Mammary epithelial cell (primary cell): ENCODE measurements at regions of chr3 and their contacts with region 1.

Region 1: DNA sequence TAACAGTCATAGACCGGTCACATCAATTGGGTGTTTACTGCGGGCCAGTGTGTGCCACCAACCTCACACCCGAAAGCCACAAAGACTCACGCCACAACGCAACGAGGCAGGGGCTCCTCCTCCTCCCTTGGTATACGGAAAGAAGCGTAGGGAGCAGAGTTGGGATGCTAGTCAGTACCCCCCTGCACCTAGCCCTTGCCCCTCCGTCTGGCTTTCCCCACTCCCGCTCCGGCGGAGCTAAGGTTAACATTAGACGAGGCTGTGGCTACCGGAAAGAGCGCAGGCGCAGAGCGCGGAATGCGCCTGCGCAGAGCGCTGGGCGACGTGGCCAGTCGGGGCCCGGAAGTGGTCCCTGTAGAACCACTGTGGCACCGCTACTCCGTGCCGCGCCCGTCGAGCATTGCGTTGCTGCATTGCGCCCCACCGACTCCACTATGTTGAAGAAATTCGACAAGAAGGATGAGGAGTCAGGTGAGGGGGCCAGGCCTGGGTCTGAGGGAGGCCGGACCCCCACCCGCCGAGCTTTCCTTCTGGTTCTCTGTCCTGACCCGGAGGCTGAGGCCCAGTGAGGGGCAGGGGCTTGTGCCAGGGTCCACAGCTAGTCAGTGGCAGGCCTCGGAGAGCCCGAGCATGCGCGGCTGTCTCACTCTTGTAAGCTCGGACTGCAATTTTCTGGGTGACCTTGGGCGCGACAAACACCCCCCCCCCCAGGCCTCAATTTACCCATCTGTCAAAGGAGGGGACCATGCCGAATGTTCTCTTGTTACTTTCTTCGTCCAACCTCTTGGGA is at the start of gene COPG1:
- DNase-seq: peak; percentile 84
- H3K4me3 ChIP-seq: peak within 1 kb of the TSS; percentile 89 to 94 (median 92)
- H3K27ac ChIP-seq: peak within 1 kb of the TSS; percentile 83
- H3K4me1 ChIP-seq: peaks cover 28% of the 10 kb centered on the region
- H3K27me3 ChIP-seq: no peaks in the 10 kb centered on the region
- CTCF ChIP-seq: no peak
- total RNA-seq, gene COPG1: 173 to 176 TPM

Region 2: GRCh38 chr3:129052675-129053074 is 196.8 kb before region 1 on chr3:
- CTCF ChIA-PET with region 1: interaction called, 5 read pairs
- dilution Hi-C with region 1: no loop called
- in situ Hi-C with region 1: no loop called
- intact Hi-C with region 1: loop called (anchors 1 kb)
- DNase-seq: no peak
- H3K4me3 ChIP-seq: no peak overlapping the region
- H3K27ac ChIP-seq: no peak overlapping the region
- H3K4me1 ChIP-seq: no peaks in the 10 kb centered on the region
- H3K27me3 ChIP-seq: no peaks in the 10 kb centered on the region
- CTCF ChIP-seq: no peak

Region 3: DNA sequence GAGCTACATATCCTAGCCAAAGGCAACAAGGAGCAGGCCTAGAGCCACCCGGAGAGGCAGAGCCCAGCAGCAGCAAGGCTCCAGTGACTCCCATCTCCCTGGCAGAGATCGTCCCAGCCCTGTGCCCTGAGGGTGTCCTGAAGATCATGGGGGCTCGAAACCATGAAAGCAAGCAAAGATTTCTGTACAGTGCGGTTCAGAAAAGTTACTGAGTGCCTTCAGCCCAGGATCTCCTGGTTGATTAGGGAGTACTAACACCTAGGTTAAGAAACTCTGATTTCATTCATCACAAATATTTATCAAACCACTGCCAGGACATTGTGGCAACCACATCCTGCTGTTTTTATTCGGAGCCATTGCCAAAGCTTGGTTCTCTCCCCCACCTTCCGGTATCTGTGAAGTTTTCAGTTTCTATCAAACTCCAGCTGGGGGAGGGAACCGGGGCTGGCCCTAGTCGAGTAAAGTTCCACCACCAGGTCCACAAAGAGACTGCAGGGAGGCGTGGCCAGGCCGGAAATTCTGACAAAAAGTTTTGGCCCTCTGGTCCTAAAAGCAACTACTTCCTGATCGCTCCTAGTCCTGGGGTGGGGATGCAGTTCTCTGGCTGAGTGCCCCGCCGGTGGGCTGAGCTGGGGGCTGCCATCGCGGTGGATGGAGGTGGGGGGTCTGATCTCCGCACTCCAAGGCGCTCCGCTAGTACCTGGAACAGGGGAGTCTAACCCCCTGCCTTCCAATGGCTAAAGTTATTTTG is 129.0 kb before region 1 on chr3:
- CTCF ChIA-PET with region 1: no interaction called
- dilution Hi-C with region 1: no loop called
- in situ Hi-C with region 1: no loop called
- intact Hi-C with region 1: loop called (anchors 1 kb)
- DNase-seq: peak; percentile 97
- H3K4me3 ChIP-seq: peak overlapping the region; percentile 85 to 87 (median 87)
- H3K27ac ChIP-seq: peak overlapping the region; percentile 98
- H3K4me1 ChIP-seq: peaks cover 29% of the 10 kb centered on the region
- H3K27me3 ChIP-seq: no peaks in the 10 kb centered on the region
- CTCF ChIP-seq: peak; percentile 12 to 43

Region 4: DNA sequence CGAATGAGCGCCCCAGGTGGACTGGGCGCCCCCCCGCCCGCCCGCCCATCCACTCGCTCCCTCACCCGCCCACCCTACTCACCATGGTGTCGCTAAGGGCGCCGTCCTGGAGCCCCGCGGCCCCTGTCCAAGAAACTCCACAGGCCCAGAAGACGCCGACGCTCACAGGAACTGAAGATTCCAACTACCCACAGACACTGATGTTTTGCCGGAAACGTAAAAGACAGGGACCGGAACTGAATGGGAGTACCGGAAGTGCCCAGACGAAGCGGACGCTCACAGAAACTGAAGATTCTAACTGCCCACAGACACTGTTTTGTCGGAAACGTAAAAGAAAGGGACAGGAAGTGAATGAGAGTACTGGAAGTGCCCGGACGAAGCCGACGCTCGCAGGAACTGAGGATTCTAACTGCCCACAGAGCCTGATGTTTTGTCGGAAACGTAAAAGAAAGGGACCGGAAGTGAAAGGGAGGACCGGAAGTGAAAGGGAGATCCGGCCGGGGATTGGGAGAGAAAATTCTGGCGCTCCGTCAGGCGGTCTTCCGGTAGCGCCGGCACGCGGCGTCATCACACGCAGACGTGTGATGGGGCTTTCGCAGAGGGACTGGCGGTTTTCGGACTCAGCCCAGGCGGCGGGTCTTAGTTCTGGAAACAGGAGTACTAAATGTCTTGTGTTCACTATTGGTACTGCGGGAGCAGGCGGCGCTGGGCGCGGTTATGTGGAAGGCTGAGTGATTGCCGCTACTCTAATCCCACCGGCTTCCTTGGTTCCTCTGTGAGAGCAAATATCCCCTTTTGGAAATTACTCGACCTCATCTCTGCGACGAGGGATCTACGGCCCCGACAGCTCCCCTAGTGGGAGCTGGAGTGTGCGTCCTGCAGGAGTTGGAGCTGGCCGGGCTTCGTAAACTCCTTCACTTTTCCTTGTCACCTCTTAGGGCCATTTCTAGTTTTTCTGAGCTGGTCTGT is 88.3 kb before region 1 on chr3 and contains the start of gene ISY1:
- CTCF ChIA-PET with region 1: interaction called, 7 read pairs
- dilution Hi-C with region 1: no loop called
- in situ Hi-C with region 1: no loop called
- intact Hi-C with region 1: loop called (anchors 1 kb)
- DNase-seq: peak; percentile 96
- H3K4me3 ChIP-seq: peak within 1 kb of the TSS; percentile 65 to 99 (median 96)
- H3K27ac ChIP-seq: peak within 1 kb of the TSS; percentile 90
- H3K4me1 ChIP-seq: peaks cover 19% of the 10 kb centered on the region
- H3K27me3 ChIP-seq: no peaks in the 10 kb centered on the region
- CTCF ChIP-seq: peak; percentile 85 to 96
- total RNA-seq, gene ISY1: 16.8 to 38.2 TPM

Region 5: GRCh38 chr3:129195731-129196256 is 53.7 kb before region 1 on chr3:
- CTCF ChIA-PET with region 1: interaction called, 7 read pairs
- dilution Hi-C with region 1: no loop called
- in situ Hi-C with region 1: no loop called
- intact Hi-C with region 1: loop called (anchors 1 kb)
- DNase-seq: peak; percentile 89
- H3K4me3 ChIP-seq: peak overlapping the region in 2 of 3 experiments; percentile 5 to 16
- H3K27ac ChIP-seq: peak overlapping the region; percentile 33
- H3K4me1 ChIP-seq: peaks cover 28% of the 10 kb centered on the region
- H3K27me3 ChIP-seq: no peaks in the 10 kb centered on the region
- CTCF ChIP-seq: no peak

Region 6: DNA sequence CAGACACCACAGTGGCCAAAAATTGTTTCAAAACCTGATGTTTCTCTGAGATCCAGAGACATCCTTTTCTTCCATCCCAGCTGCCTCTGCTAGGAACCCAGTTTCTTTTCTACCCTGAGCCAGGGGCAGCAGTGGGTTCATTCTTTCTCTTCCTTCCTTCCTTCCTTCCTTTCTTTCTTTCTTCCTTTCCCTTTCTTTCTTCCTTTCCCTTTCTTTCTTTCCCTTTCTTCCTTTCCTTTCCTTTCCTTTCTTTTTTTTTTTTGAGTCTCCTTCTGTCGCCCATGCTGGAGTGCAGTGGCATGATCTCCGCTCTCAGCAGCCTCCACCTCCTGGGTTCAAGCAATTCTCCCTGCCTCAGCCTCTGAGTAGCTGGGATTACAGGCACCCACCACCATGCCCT is 30.7 kb before region 1 on chr3:
- CTCF ChIA-PET with region 1: no interaction called
- dilution Hi-C with region 1: no loop called
- in situ Hi-C with region 1: no loop called
- intact Hi-C with region 1: no loop called
- DNase-seq: no peak
- H3K4me3 ChIP-seq: no peak overlapping the region
- H3K27ac ChIP-seq: no peak overlapping the region
- H3K4me1 ChIP-seq: no peaks in the 10 kb centered on the region
- H3K27me3 ChIP-seq: no peaks in the 10 kb centered on the region
- CTCF ChIP-seq: no peak

Region 7: GRCh38 chr3:129316131-129317013 is 66.9 kb after region 1 on chr3:
- CTCF ChIA-PET with region 1: interaction called, 4 read pairs
- dilution Hi-C with region 1: loop called (anchors 5 kb)
- in situ Hi-C with region 1: no loop called
- intact Hi-C with region 1: loop called (anchors 2 kb)
- DNase-seq: peak; percentile 80
- H3K4me3 ChIP-seq: peak overlapping the region; percentile 67 to 94 (median 89)
- H3K27ac ChIP-seq: peak overlapping the region; percentile 72
- H3K4me1 ChIP-seq: peaks cover 21% of the 10 kb centered on the region
- H3K27me3 ChIP-seq: no peaks in the 10 kb centered on the region
- CTCF ChIP-seq: peak; percentile 32 to 58

Region 8: GRCh38 chr3:129343643-129344332 is 94.3 kb after region 1 on chr3:
- CTCF ChIA-PET with region 1: no interaction called
- dilution Hi-C with region 1: no loop called
- in situ Hi-C with region 1: no loop called
- intact Hi-C with region 1: no loop called
- DNase-seq: no peak
- H3K4me3 ChIP-seq: peak overlapping the region in 1 of 3 experiments; percentile 22
- H3K27ac ChIP-seq: no peak overlapping the region
- H3K4me1 ChIP-seq: peaks cover 8% of the 10 kb centered on the region
- H3K27me3 ChIP-seq: peaks cover 2% of the 10 kb centered on the region
- CTCF ChIP-seq: peak; percentile 16 to 66